ENCODE measurements at regions of chr7 and their contacts with region 1.

Region 1: DNA sequence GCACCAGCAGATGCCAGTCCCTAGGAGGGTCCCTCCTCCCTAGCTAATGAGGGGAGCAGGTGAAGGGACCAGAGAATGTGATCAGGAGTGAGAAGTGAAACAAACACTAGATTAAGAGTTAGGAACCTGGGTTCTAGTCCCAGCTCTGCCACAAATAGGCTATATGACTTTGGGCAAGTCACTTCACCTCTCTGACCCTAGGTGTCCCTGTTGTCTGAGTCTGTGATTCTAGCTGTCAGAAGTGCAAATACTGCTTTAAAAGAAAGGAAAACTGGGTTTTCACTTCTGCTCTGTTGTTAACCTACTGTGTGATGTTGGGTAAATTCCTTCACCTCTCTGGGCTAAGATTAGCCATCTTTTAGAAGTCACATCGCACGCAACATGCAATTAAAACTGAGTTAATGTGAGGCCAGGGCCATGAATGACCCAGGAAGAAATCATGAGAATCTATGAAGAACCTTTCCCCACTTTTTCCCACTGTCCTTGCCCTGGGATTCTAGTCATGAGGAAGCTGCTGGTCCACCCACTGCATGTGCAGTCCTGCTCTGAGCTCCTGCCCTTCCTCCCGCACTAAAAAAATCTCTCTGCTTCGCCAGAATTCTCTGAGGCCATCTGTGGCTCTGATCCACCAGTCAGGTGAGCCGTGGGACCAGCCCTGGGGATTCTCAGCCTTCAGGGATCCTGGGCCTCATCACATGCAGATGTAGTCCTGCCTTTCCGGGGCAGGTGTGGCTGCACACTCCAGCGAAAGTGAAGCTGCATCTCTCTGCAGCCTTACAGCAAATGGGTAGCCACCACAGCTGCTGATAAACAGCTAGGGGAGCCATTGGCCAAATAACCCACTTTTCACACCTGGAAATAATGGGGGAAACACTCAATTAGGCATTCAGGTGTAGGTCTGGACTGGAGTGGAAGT is 181.7 kb downstream of the PLXNA4 start:
- DNase-seq: peak; percentile 65
- ATAC-seq: peak; percentile 85
- H3K4me3 Mint-ChIP-seq: no peak overlapping the region
- H3K27ac Mint-ChIP-seq: peak overlapping the region; percentile 78
- H3K4me1 Mint-ChIP-seq: peaks cover 39% of the 10 kb centered on the region
- H3K27me3 Mint-ChIP-seq: peaks cover 10% of the 10 kb centered on the region

Region 2: GRCh38 chr7:132430861-132431822 is 36.6 kb after region 1 on chr7:
- CTCF ChIA-PET with region 1: interaction called, 20 read pairs
- POLR2A ChIA-PET with region 1: interaction called, 3 read pairs
- DNase-seq: peak; percentile 90
- ATAC-seq: peak; percentile 88
- H3K4me3 Mint-ChIP-seq: peak overlapping the region; percentile 3
- H3K27ac Mint-ChIP-seq: peak overlapping the region; percentile 89
- H3K4me1 Mint-ChIP-seq: peaks cover 98% of the 10 kb centered on the region
- H3K27me3 Mint-ChIP-seq: no peaks in the 10 kb centered on the region

Region 3: GRCh38 chr7:132451161-132451560 is 56.6 kb after region 1 on chr7:
- CTCF ChIA-PET with region 1: interaction called, 10 read pairs
- POLR2A ChIA-PET with region 1: no interaction called
- DNase-seq: peak; percentile 75
- ATAC-seq: peak; percentile 71
- H3K4me3 Mint-ChIP-seq: peak overlapping the region; percentile 4
- H3K27ac Mint-ChIP-seq: peak overlapping the region; percentile 84
- H3K4me1 Mint-ChIP-seq: peaks cover 98% of the 10 kb centered on the region
- H3K27me3 Mint-ChIP-seq: no peaks in the 10 kb centered on the region

Region 4: DNA sequence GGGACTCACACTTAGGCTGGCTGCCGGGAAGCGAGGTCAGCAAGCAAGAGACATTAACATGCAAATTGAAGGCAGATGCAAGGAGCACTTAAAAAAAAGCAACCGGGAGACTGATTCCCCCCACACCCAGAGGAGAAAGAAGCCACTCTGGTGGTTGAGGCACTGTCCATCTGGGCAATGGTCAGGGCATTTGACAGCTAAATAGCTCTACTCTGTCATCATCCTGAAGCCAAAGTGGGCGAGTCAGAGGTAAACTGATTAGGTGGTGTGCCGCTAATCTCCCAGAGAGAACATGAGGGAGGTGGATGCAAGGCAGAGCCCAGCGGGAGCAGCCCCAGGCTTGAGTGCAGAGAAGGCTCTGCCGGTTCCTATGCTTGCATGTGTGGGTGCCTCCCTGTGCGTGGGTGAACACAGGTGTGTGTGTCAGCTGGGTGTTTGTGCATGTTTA is 81.2 kb after region 1 on chr7:
- CTCF ChIA-PET with region 1: interaction called, 10 read pairs
- POLR2A ChIA-PET with region 1: no interaction called
- DNase-seq: no peak
- ATAC-seq: no peak
- H3K4me3 Mint-ChIP-seq: no peak overlapping the region
- H3K27ac Mint-ChIP-seq: no peak overlapping the region
- H3K4me1 Mint-ChIP-seq: peaks cover 67% of the 10 kb centered on the region
- H3K27me3 Mint-ChIP-seq: peaks cover 13% of the 10 kb centered on the region

Region 5: DNA sequence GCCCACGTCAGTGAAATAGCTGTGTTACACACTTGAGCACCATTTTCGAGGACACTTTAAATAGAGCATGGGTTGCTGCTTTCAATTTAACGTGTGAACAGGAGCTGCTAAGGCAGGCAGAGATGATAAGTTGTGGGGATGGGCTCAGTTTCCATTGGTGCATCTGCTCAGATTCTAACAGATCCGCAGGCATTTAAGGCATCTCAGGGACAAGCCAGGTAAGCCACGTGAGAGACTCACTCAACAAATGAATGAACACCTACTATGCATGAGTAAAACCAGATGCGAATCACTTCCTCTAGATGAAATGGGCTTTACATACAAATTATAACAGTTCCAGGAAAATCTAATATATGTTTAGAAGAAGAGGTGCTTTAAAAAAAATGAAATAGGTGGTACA is 147.1 kb after region 1 on chr7:
- CTCF ChIA-PET with region 1: interaction called, 19 read pairs
- POLR2A ChIA-PET with region 1: no interaction called
- DNase-seq: no peak
- ATAC-seq: no peak
- H3K4me3 Mint-ChIP-seq: no peak overlapping the region
- H3K27ac Mint-ChIP-seq: no peak overlapping the region
- H3K4me1 Mint-ChIP-seq: peaks cover 60% of the 10 kb centered on the region
- H3K27me3 Mint-ChIP-seq: no peaks in the 10 kb centered on the region

Region 6: DNA sequence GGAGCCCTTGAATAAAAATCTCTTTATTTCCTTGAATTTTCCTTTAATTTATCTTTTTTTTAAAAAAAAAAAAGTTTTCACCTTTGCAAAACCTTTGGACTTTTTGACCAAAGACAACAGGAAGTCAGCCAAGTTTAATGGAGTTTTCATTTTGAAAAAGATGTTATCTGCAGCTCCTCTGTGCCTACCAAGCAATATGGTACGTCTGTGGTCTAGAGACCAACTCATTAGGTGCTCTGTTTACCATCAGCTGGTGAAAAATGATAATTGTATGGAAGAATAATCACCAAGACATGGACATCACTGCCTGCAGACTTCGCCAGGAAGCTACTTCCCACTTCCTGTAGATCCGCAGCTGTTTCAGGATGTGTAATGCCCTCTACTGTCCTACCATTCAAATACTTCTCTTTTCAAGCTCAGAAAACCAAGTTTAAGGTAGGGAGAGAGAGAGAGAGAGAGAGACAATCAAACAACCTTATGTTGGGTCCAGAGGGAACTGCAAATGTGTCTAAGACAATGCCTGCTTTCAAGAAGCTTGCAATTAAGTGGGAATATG is 163.0 kb after region 1 on chr7:
- CTCF ChIA-PET with region 1: interaction called, 23 read pairs
- POLR2A ChIA-PET with region 1: no interaction called
- DNase-seq: no peak
- ATAC-seq: peak; percentile 39
- H3K4me3 Mint-ChIP-seq: no peak overlapping the region
- H3K27ac Mint-ChIP-seq: peak overlapping the region; percentile 10
- H3K4me1 Mint-ChIP-seq: peaks cover 58% of the 10 kb centered on the region
- H3K27me3 Mint-ChIP-seq: peaks cover 21% of the 10 kb centered on the region

Region 7: DNA sequence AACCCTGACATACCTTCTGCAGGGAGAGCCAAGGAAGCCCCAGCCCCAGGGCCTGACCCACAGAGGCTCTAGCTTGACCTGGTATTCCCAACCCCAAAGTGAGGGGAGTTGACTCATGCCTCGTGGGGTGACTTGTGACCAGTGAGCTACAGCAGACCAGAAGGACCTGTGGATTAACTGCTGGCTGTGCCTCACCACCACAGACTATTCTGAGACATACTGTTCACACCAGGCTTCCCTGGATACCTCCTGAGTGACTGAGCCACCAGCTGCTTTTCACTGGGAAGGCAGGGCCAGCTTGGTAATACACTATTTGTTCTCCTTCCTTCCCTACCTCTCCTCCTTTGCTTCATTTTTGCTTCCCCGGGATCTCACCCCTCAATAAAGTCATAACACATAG is 174.4 kb after region 1 on chr7:
- CTCF ChIA-PET with region 1: interaction called, 312 read pairs
- POLR2A ChIA-PET with region 1: no interaction called
- DNase-seq: no peak
- ATAC-seq: no peak
- H3K4me3 Mint-ChIP-seq: no peak overlapping the region
- H3K27ac Mint-ChIP-seq: no peak overlapping the region
- H3K4me1 Mint-ChIP-seq: peaks cover 37% of the 10 kb centered on the region
- H3K27me3 Mint-ChIP-seq: peaks cover 74% of the 10 kb centered on the region

Measured in activated CD8-positive, alpha-beta T cell treated with anti-CD3 and anti-CD28 coated beads, Interleukin-2, amount 10 ng/mL, durations not matched to agents 7 days and 5 days (primary cell).